ENCODE measurements at regions of chr10 and their contacts with region 1.

Region 1: DNA sequence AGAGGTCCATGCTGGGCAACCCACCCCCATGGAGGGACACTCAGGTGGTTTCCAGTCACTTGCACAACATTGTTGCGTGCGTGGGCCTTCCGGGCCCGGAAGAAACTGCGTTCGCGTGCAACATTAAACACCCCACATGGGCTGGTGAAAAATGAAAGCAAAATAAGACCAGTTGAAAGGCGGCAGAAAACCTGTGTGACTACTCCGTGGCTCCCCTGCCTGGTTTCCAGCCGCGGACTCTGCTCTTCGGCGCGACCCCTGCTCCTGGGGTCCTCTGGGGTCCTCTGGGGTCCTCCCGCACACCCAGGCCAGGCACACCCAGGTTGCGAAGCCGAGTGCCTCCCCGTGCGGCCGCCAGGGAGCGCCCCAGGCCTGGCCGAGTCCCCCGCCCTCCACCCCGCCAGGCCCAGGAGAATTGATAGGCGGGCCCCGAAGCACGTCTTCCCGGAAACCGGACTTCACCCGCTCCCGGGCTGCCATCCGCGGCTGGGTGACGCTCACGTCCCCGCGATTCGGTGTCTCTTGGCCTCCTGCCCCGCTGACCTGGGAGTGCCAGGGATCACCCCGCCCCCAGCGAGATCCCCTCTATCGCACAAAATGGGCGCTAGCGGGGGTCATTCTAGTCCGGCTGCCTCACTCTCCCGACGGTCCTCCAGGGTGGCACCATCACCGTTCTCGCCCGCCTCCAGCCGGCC is 1.9 kb upstream of the SH2D4B start:
- DNase-seq: peak; percentile 66 to 82 (median 78)
- H3K4me3 ChIP-seq: peak overlapping the region; percentile 45 to 73
- H3K4me3 Mint-ChIP-seq: peak overlapping the region; percentile 84 to 96 (median 92)
- H3K27ac ChIP-seq: peak overlapping the region; percentile 87
- H3K27ac Mint-ChIP-seq: peak overlapping the region; percentile 93 to 99 (median 98)
- H3K4me1 ChIP-seq: peaks cover 26% of the 10 kb centered on the region
- H3K4me1 Mint-ChIP-seq: peaks cover 9 to 44% (median 31%) of the 10 kb centered on the region in 4 donors
- H3K27me3 ChIP-seq: no peaks in the 10 kb centered on the region
- H3K27me3 Mint-ChIP-seq: no peaks in the 10 kb centered on the region

Region 2: GRCh38 chr10:80372675-80373074 is 163.1 kb before region 1 on chr10:
- CTCF ChIA-PET with region 1: interaction called, 8 read pairs
- POLR2A ChIA-PET with region 1: interaction called, 3 read pairs
- intact Hi-C with region 1: loop called (anchors 10 kb)
- DNase-seq: no peak
- H3K4me3 ChIP-seq: no peak overlapping the region
- H3K4me3 Mint-ChIP-seq: no peak overlapping the region
- H3K27ac ChIP-seq: no peak overlapping the region
- H3K27ac Mint-ChIP-seq: no peak overlapping the region
- H3K4me1 ChIP-seq: no peaks in the 10 kb centered on the region
- H3K4me1 Mint-ChIP-seq: peaks cover 0 to 2% (median under 1%) of the 10 kb centered on the region in 4 donors
- H3K27me3 ChIP-seq: no peaks in the 10 kb centered on the region
- H3K27me3 Mint-ChIP-seq: peaks cover 5 to 8% of the 10 kb centered on the region in 2 donors

Region 3: DNA sequence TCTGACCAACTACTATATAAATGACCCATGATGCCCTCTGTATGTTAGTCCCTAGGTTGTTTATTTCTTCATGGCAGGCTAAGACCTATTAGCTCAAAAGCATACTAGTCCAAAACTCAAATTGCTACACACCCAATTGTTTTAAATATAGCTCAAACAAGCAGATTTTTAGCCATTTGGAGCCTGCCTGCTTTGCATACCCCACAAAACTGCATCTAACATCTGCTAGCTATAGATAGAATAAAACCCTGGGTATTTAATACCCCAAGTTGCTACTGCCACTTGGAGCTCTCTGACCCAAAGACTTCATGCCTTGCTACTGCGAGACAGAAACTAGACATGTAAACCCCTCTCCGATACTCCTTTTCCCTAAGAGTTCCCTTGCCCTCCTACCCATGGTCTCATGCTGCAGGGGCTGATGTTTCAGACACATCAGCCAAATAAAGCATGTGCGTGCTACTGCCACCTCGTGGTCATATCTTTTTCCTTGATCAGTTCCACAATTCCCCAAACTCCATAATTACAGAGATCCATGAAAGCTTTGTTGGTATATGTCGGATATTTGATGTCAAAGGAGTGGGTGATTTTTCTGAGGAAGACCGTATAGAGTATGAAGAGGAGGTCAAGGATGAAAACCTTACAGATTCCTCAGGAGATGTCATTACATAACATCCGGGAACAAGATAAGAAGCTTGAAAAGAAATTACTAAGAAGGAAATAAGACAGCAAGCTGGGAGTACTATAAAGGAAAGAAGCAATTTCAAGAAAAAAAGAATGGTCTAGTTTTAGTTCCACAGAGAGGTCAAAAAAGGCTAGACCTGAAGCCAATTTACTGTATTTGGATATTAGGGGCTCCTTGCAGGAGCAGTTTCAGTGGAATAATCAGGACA is 388.5 kb after region 1 on chr10:
- CTCF ChIA-PET with region 1: no interaction called
- POLR2A ChIA-PET with region 1: no interaction called
- intact Hi-C with region 1: loop called (anchors 5 kb)
- DNase-seq: no peak
- H3K4me3 ChIP-seq: no peak overlapping the region
- H3K4me3 Mint-ChIP-seq: no peak overlapping the region
- H3K27ac ChIP-seq: no peak overlapping the region
- H3K27ac Mint-ChIP-seq: no peak overlapping the region
- H3K4me1 ChIP-seq: no peaks in the 10 kb centered on the region
- H3K4me1 Mint-ChIP-seq: no peaks in the 10 kb centered on the region
- H3K27me3 ChIP-seq: no peaks in the 10 kb centered on the region
- H3K27me3 Mint-ChIP-seq: peaks cover 1 to 5% of the 10 kb centered on the region in 2 donors